ENCODE measurements at regions of chr19 and their contacts with region 1.

Region 1: DNA sequence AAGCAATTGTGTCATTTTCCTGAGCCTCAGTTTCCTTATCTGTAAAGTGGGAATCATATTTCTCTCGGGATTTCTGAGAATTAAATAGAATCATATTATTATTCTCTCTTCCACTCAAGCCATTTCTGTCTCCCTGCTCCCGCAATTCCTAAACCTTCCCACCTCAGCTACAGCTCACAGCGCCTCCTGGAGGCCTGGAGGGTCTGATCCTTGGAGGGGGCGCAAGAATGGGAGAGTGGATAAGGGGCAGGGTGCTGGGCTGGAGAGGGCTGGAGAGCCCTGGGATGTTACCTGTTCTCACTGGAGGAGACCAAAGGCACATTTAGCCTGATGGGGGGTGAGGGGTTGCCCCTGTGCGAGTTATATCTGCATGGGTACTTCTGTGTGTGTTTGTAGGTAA is 31.1 kb upstream of the CYP2S1 start:
- DNase-seq: no peak
- H3K4me3 ChIP-seq: no peak overlapping the region
- H3K27ac ChIP-seq: no peak overlapping the region
- H3K4me1 ChIP-seq: peaks cover 17% of the 10 kb centered on the region
- H3K27me3 ChIP-seq: no peaks in the 10 kb centered on the region
- CTCF ChIP-seq: peak; percentile 40; the same call in 1 of the 2 replicates

Region 2: GRCh38 chr19:40872209-40872608 is 289.7 kb before region 1 on chr19:
- CTCF ChIA-PET with region 1: no interaction called
- POLR2A ChIA-PET with region 1: no interaction called
- intact Hi-C with region 1: no loop called
- DNase-seq: no peak
- H3K4me3 ChIP-seq: no peak overlapping the region
- H3K27ac ChIP-seq: no peak overlapping the region
- H3K4me1 ChIP-seq: no peaks in the 10 kb centered on the region
- H3K27me3 ChIP-seq: peaks cover 13% of the 10 kb centered on the region
- CTCF ChIP-seq: no peak

Region 3: GRCh38 chr19:41023193-41023592 is 138.7 kb before region 1 on chr19:
- CTCF ChIA-PET with region 1: no interaction called
- POLR2A ChIA-PET with region 1: no interaction called
- intact Hi-C with region 1: no loop called
- DNase-seq: no peak
- H3K4me3 ChIP-seq: no peak overlapping the region
- H3K27ac ChIP-seq: no peak overlapping the region
- H3K4me1 ChIP-seq: no peaks in the 10 kb centered on the region
- H3K27me3 ChIP-seq: peaks cover 9% of the 10 kb centered on the region; the same call in 1 of the 2 replicates
- CTCF ChIP-seq: no peak

Region 4: DNA sequence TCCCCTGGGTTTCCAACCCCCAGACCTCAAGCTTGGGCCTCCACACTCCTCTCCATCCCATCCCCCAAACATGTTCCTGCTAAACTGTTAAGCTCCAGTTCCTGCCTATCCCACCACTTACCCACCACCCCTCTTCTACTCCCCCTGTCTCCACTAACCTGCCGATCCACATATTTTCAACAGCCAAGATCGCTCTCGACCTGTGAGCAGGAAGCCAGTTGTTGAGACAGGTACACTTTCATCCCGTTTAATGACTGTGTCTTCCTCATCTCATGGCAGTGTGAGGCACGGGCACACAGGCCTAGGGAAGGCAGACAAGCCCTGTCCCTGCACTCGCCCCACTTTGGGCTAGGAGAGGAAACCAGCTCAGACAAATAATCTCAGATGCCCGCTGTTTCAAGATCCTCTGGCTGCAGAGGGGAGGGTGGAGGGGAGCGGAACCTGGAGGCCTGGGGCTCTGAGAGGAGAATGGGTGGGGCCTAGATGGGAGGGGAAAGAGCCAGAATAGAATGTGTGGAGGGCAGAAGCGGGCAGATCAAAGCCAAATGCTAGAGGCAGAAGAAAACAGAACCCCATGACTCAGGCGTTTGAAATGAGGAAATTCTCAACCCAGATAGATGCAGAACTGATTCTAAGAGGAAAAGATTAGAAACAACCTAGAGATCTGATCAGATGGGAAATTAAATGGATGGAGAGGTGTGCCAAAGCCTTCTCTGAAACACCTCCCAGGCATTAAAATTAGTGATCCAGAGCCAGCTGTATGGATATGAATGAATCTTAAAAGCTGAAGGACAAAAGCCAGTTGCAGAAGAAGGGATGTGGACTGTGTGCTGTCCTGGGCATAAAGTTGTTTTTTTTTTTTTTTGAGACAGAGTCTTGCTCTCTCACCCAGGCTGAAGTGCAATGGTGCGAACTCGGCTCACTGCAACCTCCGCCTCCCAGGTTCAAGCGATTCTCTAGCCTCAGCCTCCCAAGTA is 14.2 kb after region 1 on chr19:
- CTCF ChIA-PET with region 1: interaction called, 5 read pairs
- POLR2A ChIA-PET with region 1: interaction called, 6 read pairs
- intact Hi-C with region 1: loop called (anchors 1 kb)
- DNase-seq: peak; percentile 90 to 95
- H3K4me3 ChIP-seq: peak overlapping the region; percentile 35
- H3K27ac ChIP-seq: peak overlapping the region; percentile 74
- H3K4me1 ChIP-seq: peaks cover 38% of the 10 kb centered on the region
- H3K27me3 ChIP-seq: no peaks in the 10 kb centered on the region
- CTCF ChIP-seq: no peak

Region 5: GRCh38 chr19:41192574-41193429 is 30.9 kb after region 1 on chr19 and contains the start of gene CYP2S1:
- CTCF ChIA-PET with region 1: no interaction called
- POLR2A ChIA-PET with region 1: no interaction called
- intact Hi-C with region 1: no loop called
- DNase-seq: peak in 1 of 2 experiments; percentile 60
- H3K4me3 ChIP-seq: peak within 1 kb of the TSS; percentile 60
- H3K27ac ChIP-seq: no peak within 1 kb of the TSS
- H3K4me1 ChIP-seq: peaks cover 18% of the 10 kb centered on the region
- H3K27me3 ChIP-seq: no peaks in the 10 kb centered on the region
- CTCF ChIP-seq: no peak
- total RNA-seq, gene CYP2S1: 6.8 and 14.9 TPM in 2 replicates

Region 6: DNA sequence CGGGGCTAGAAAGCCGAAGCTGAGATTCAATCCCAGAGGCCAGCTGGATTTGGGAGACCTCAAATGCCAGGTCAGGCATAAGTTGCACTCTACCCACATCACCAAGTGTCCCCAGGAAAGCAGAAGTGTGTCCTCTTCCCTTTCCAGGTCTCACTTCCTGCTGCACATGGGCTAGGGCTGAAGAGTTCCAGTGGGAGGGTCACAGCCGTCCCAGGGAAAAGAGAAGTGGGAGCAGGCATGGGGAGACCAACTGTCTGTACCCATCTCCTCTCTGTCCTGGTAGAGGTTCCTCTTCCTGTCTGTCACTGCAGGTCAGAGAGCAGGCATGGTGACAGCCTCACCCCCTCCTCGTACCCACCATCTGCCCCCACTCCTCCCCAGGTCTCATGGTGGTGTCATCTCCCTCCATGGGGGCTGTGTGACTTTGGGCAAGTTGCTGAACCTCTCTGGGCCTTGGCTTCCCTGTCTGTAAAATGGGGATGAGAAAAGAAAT is 71.9 kb after region 1 on chr19:
- CTCF ChIA-PET with region 1: no interaction called
- POLR2A ChIA-PET with region 1: interaction called, 15 read pairs
- intact Hi-C with region 1: no loop called
- DNase-seq: no peak
- H3K4me3 ChIP-seq: no peak overlapping the region
- H3K27ac ChIP-seq: no peak overlapping the region
- H3K4me1 ChIP-seq: no peaks in the 10 kb centered on the region
- H3K27me3 ChIP-seq: no peaks in the 10 kb centered on the region
- CTCF ChIP-seq: no peak

Region 7: DNA sequence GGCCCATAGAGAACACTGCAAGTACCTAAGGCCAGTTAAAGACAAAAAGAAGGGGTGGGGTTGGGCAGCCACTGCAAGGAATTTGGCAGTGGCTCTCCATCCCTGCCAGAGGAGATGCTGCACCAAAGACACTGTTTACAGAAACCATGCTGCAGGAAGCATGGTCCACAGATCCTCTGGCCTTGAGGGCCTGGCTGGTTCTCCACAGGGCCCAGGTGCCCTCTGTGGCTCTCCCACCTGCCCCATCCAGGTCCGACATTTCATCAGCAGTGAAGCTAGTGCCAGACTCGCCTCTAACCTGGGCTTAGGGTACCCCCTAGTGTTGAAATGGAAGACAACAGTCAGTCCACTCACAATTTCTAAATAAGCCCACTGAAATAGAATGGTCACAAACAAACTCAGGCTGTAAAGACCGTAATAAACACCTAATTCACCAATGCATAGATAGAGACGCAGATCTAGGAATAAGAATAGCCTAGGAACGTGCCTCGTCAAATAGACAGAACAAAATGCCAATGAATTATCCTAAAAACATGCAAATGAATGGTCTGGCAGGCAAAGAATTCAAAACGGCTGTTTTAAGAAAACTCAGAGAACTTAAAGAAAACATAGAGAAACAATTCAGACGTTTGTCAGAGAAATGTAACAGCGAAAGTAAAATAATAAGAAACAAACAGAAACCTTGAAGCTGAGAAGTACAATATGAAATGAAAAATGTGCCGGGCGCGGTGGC is 659.3 kb after region 1 on chr19:
- CTCF ChIA-PET with region 1: no interaction called
- POLR2A ChIA-PET with region 1: no interaction called
- intact Hi-C with region 1: no loop called
- DNase-seq: peak; percentile 45 to 47
- H3K4me3 ChIP-seq: no peak overlapping the region
- H3K27ac ChIP-seq: no peak overlapping the region
- H3K4me1 ChIP-seq: no peaks in the 10 kb centered on the region
- H3K27me3 ChIP-seq: 0 out of 2 replicates have a peak, but pooled peaks cover 5% of the 10 kb centered on the region
- CTCF ChIP-seq: peak; percentile 87